ENCODE measurements at regions of chr1 and their contacts with region 1.

Region 1: DNA sequence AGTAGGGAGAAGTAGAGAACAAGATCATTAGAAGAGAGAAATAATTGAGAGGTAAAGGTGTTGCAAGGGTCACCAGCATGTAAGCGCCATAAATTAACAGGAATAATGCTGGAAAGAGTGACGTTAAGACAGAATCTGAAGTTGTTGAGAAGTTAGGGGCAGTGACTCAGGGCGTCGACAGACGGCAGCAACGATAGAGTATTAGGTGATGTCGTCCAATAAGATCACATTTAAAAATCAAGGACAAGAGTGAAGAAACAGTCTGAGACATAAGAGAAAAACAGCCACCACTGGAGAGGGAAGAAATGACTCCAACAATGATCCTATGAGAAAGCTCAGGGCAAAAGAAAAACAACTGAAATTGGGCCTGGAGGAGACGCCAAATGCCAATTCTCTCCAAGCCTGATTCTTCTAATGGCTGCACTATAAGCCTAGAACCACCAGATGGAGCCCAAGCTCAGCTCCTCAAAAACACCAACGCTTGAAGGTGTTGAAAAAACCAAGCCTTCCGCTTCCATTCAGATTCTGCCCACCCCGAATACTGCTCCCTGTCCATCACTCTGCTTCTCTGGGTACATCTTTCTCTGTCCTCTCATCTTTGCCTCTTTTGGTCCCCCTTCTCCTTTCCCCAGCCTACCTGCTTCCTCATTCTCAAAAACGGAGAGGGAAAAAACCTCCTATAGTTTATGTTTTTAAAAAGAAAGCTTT is 70.0 kb downstream of the LUZP1 start:
- DNase-seq: no peak
- ATAC-seq: peak; percentile 73 to 85 (median 77)
- H3K4me3 ChIP-seq: no peak overlapping the region
- H3K27ac ChIP-seq: no peak overlapping the region
- H3K4me1 ChIP-seq: peaks cover 37% of the 10 kb centered on the region
- H3K27me3 ChIP-seq: no peaks in the 10 kb centered on the region
- CTCF ChIP-seq: peak; percentile 94

Region 2: GRCh38 chr1:22976461-22977243 is 122.0 kb before region 1 on chr1:
- intact Hi-C with region 1: loop called in 1 of 2 experiments (anchors 10 kb)
- DNase-seq: peak in 1 of 2 donors; percentile 36
- ATAC-seq: peak; percentile 84 to 92 (median 86)
- H3K4me3 ChIP-seq: no peak overlapping the region
- H3K27ac ChIP-seq: no peak overlapping the region
- H3K4me1 ChIP-seq: no peaks in the 10 kb centered on the region
- H3K27me3 ChIP-seq: peaks cover 0 to 30% (median 4%) of the 10 kb centered on the region in 3 donors
- CTCF ChIP-seq: peak; percentile 64

Region 3: GRCh38 chr1:23062271-23062670 is 36.3 kb before region 1 on chr1:
- intact Hi-C with region 1: no loop called
- DNase-seq: no peak
- ATAC-seq: no peak
- H3K4me3 ChIP-seq: no peak overlapping the region
- H3K27ac ChIP-seq: no peak overlapping the region
- H3K4me1 ChIP-seq: no peaks in the 10 kb centered on the region
- H3K27me3 ChIP-seq: no peaks in the 10 kb centered on the region
- CTCF ChIP-seq: no peak

Region 4: DNA sequence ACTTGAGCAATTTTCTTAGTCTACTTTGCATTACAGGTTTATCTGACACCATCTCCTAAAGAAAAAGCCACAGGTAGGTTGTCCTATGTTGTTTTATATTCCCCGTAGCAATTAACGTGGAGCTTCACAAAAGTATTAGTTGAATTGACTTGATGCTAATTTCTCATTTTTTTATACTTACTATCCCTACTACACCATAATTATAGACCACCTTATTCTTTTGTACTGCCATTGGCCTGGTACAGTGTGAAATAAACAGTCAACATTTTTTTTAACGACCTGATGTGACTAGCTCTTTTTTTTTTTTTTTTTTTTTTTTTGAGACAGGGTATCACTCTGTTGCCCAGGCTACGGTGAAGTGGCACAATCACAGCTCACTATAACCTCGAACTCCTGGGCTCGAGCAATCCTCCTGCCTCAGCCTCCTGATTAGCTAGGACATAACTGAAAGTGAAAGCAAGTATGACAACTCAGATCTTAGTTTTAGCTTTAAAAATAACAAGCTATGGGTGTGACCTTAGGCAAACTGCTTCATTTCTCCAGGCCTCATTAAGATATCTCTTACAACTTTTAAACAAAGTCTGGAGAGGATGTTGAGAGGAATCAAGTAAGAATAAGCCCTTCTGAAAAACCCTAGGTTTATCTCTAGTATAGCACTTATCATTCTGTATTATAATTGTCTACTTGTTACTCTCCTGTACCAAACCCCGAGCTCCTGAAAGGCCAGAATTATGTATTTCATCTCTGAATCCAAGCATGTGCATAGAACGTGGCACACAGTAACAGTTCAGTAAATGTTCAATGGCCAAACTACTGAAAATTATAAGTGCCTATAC is 20.6 kb after region 1 on chr1:
- intact Hi-C with region 1: no loop called
- DNase-seq: no peak
- ATAC-seq: no peak
- H3K4me3 ChIP-seq: peak overlapping the region; percentile 31
- H3K27ac ChIP-seq: no peak overlapping the region
- H3K4me1 ChIP-seq: peaks cover 11% of the 10 kb centered on the region
- H3K27me3 ChIP-seq: no peaks in the 10 kb centered on the region
- CTCF ChIP-seq: no peak

Region 5: DNA sequence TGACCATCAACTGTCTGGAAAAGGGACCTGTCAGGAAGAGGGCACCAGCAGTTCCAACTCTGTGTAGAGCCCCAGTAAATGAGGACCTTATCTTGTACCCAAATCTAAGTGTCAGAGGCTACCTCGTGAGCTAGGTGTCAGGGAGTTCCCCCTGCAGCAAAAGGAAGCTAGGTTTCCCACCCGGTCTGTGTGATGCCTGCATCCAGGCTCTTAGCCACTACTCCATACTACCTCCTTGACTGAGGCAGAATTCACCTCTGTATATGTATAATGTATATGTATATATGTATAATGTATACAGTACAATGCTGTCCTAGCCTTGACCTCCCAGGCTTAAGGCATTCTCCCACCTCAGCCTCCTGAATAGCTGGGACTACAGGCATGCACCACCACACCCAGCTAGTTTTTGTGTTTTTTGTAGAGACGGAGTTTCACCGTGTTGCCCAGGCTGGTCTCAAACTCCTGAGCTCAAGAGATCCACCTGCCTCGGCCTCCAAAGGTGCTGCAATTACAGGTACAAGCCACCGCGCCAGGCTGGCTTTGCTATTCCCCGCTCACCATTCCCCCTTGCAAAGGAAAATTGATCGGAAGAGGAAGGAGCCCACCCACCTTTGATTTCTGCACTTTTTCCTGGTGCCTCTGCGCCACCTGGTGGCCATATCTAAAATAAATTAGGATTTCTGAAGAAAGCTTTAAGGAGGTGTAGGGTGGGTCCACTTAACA is 85.8 kb after region 1 on chr1:
- intact Hi-C with region 1: loop called (anchors 1 kb)
- DNase-seq: no peak
- ATAC-seq: peak in 2 of 4 donors; percentile 31 to 66
- H3K4me3 ChIP-seq: peak overlapping the region; percentile 55
- H3K27ac ChIP-seq: no peak overlapping the region
- H3K4me1 ChIP-seq: no peaks in the 10 kb centered on the region
- H3K27me3 ChIP-seq: peaks cover 0 to 7% (median 0%) of the 10 kb centered on the region in 3 donors
- CTCF ChIP-seq: peak; percentile 87

Region 6: GRCh38 chr1:23273450-23274133 is 175.0 kb after region 1 on chr1:
- intact Hi-C with region 1: loop called (anchors 5 to 10 kb)
- DNase-seq: no peak
- ATAC-seq: no peak
- H3K4me3 ChIP-seq: no peak overlapping the region
- H3K27ac ChIP-seq: no peak overlapping the region
- H3K4me1 ChIP-seq: no peaks in the 10 kb centered on the region
- H3K27me3 ChIP-seq: peaks cover 0 to 49% (median 2%) of the 10 kb centered on the region in 3 donors
- CTCF ChIP-seq: no peak

Region 7: DNA sequence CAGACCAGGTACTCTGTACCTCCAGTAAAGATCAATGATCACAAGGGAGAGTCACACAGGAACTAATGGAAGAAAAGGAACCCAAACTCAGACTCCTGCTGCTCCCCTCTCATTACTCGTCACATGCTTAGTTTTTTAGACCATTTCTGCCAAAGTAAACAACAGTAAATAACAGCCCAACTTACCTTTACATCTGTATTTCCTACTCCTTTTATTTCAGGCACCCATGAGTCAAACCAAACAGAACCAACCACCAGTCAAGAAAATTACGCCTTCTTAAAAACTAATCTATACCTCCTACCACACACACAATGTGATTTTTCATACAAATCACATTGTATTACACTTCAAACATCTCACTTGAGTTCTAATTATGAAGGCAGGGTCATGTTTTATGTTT is 180.1 kb after region 1 on chr1:
- intact Hi-C with region 1: loop called (anchors 5 to 10 kb)
- DNase-seq: no peak
- ATAC-seq: no peak
- H3K4me3 ChIP-seq: no peak overlapping the region
- H3K27ac ChIP-seq: no peak overlapping the region
- H3K4me1 ChIP-seq: no peaks in the 10 kb centered on the region
- H3K27me3 ChIP-seq: peaks cover 0 to 25% (median 0%) of the 10 kb centered on the region in 3 donors
- CTCF ChIP-seq: no peak

Region 8: GRCh38 chr1:23403735-23404486 is 305.3 kb after region 1 on chr1:
- intact Hi-C with region 1: loop called in 1 of 2 experiments (anchors 10 kb)
- DNase-seq: peak; percentile 84 to 92
- ATAC-seq: peak; percentile 77 to 81 (median 80)
- H3K4me3 ChIP-seq: no peak overlapping the region
- H3K27ac ChIP-seq: peak overlapping the region; percentile 75
- H3K4me1 ChIP-seq: peaks cover 54% of the 10 kb centered on the region
- H3K27me3 ChIP-seq: no peaks in the 10 kb centered on the region
- CTCF ChIP-seq: peak; percentile 93